Activated B cell treated with CpG ODN at 0.5 μM for 24 hours (primary cell): ENCODE measurements at regions of chr7 and their contacts with region 1.

Region 1: GRCh38 chr7:98315341-98315983 is 34.0 kb downstream of the BRI3 start:
- DNase-seq: no peak
- ATAC-seq: peak; percentile 61
- H3K4me3 Mint-ChIP-seq: peak overlapping the region; percentile 15
- H3K27ac Mint-ChIP-seq: peak overlapping the region; percentile 76
- H3K4me1 Mint-ChIP-seq: peaks cover 41% of the 10 kb centered on the region
- H3K27me3 Mint-ChIP-seq: peaks cover 28% of the 10 kb centered on the region
- CTCF ChIP-seq: no peak

Region 2: DNA sequence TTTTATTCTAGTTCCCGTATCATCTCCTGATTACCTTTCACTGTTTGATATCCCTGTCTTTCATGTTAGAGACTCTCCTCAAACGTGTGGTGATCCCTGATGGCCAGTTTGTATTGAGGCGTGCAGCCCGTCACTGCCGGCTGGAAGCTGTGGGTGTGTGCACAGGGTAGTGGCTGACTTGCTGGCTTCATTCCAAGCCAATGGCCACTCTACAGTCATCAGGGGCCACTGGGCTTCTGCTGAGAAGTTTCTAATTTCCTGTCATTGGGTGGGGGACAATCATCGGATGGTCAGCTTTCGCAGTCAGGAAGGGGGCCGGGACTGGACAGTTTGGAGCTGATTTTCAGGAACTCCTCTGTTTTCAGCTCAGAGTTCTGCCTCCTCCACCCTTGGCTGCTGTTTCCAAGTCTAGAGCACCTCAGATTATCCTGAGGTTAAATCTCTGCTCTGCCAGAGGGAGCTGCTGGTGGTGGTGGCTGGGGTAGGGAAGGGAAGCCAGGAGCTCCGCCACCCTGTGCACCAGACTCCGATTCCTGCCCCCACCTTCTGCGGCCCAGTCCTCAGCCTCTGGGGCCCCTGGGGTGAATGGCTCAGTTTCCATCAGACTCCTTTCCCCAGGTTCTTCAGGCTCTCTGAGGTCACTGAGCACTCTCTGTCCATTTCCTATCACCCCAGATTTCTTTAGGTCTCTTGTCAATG is 50.5 kb after region 1 on chr7:
- CTCF ChIA-PET with region 1: no interaction called
- POLR2A ChIA-PET with region 1: no interaction called
- intact Hi-C with region 1: no loop called
- DNase-seq: no peak
- ATAC-seq: no peak
- H3K4me3 Mint-ChIP-seq: no peak overlapping the region
- H3K27ac Mint-ChIP-seq: no peak overlapping the region
- H3K4me1 Mint-ChIP-seq: no peaks in the 10 kb centered on the region
- H3K27me3 Mint-ChIP-seq: no peaks in the 10 kb centered on the region
- CTCF ChIP-seq: no peak

Region 3: DNA sequence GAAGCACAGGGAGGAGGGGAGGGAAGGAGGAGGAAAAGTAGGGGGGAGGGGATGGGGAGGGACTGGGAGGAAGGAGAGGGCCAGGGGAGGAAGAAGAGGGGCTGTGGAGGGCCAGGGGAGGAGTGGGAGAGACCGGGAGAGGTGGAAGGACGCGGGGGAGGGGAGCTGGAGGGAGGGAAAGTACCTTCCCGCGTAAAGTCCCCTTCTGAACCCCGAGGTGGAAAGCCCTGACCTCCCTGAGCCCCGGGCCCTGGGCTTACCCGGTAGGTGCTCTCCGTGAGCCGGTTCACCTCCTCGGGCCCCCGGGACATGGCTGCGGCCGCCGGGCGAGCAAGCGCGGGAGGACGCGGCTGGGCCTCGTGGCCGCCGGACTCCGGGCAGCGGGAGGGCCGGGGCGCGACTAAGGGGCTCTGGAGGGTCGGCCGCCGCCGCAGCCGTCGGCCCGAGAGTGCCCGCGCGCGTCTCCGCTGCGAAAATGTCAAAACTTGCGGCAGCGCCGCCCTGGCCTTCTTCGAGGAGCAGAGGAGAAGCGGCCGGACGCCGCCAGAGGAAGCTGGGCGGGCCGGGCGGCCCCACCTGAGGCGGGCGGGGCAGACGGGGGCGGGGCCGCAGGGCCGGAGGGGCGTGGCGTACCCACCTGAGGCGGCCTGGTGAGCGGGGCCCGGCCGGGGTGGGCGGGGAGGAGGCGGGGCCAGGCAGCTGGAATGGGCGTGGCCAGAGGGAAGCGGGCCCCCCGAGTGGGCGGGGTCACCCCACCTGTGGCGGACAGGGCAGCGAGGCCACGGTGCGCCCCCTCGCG is 85.3 kb after region 1 on chr7 and contains the start of gene BAIAP2L1:
- CTCF ChIA-PET with region 1: interaction called, 4 read pairs
- POLR2A ChIA-PET with region 1: interaction called, 20 read pairs
- intact Hi-C with region 1: loop called (anchors 1 kb)
- DNase-seq: peak; percentile 87
- ATAC-seq: peak; percentile 92
- H3K4me3 Mint-ChIP-seq: peak within 1 kb of the TSS; percentile 76
- H3K27ac Mint-ChIP-seq: peak within 1 kb of the TSS; percentile 35
- H3K4me1 Mint-ChIP-seq: peaks cover 27% of the 10 kb centered on the region
- H3K27me3 Mint-ChIP-seq: peaks cover 26% of the 10 kb centered on the region
- CTCF ChIP-seq: no peak
- total RNA-seq, gene BAIAP2L1: 8.1 and 10.4 TPM in 2 replicates

Region 4: GRCh38 chr7:98641646-98642500 is 326.4 kb after region 1 on chr7:
- CTCF ChIA-PET with region 1: no interaction called
- POLR2A ChIA-PET with region 1: no interaction called
- intact Hi-C with region 1: loop called (anchors 10 kb)
- DNase-seq: no peak
- ATAC-seq: peak; percentile 71
- H3K4me3 Mint-ChIP-seq: peak overlapping the region; percentile 44
- H3K27ac Mint-ChIP-seq: peak overlapping the region; percentile 67
- H3K4me1 Mint-ChIP-seq: peaks cover 21% of the 10 kb centered on the region
- H3K27me3 Mint-ChIP-seq: peaks cover 6% of the 10 kb centered on the region
- CTCF ChIP-seq: no peak

Region 5: DNA sequence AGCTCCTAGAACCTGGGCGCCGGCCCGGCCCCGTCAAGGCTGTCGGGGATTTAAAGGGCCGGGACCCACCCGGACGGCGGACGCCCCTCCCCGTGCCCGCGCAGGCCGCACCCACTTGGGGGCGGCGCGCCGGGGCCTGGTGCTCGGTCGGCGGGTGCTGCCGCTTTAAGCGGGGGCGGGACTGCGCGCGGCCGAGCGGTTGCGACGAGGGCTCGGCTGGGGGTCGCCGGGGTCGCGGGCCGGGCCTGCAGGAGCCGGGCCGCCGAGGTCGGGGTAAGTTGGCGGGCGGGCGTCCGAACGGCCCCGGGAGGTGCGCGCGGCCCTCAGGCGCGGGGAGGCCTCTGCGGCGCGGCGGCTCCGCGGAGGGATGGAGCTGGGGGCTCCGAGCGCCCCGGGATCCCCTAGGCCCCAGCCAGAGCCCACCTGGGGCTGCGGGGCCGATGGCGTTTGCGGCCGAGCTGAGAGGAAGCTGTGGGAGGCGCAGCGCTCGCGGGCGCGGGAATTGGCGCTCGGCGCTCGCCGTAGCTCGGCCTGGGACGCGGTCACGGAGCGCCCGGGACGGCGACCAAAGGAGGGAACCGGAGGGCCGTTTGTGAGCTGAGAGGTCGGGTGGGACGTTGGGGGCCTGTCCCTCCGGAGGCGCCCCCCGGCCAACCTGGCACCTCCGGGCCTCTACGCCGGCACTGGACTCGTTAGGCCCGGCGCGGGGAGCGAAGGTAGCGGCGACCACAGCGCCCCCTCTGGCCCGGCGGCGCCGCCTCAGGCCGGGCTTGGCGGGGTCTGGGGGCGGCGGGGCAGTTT is 563.1 kb after region 1 on chr7 and contains the start of gene TRRAP:
- CTCF ChIA-PET with region 1: no interaction called
- POLR2A ChIA-PET with region 1: no interaction called
- intact Hi-C with region 1: loop called (anchors 10 kb)
- DNase-seq: peak; percentile 80
- ATAC-seq: peak; percentile 81
- H3K4me3 Mint-ChIP-seq: peak within 1 kb of the TSS; percentile 91
- H3K27ac Mint-ChIP-seq: peak within 1 kb of the TSS; percentile 93
- H3K4me1 Mint-ChIP-seq: peaks cover 19% of the 10 kb centered on the region
- H3K27me3 Mint-ChIP-seq: peaks cover 3% of the 10 kb centered on the region
- CTCF ChIP-seq: peak; percentile 82
- total RNA-seq, gene TRRAP: 73.9 and 77.9 TPM in 2 replicates